ENCODE measurements at regions of chr11 and their contacts with region 1.

Region 1: GRCh38 chr11:120527111-120527761 is 15.7 kb downstream of the GRIK4 start:
- DNase-seq: peak in 1 of 4 donors; percentile 75
- ATAC-seq: peak; percentile 39
- H3K4me3 ChIP-seq: no peak overlapping the region
- H3K27ac ChIP-seq: no peak overlapping the region
- H3K4me1 ChIP-seq: no peaks in the 10 kb centered on the region
- H3K27me3 ChIP-seq: peaks cover 0 to 65% of the 10 kb centered on the region in 2 donors
- CTCF ChIP-seq: no peak

Region 2: DNA sequence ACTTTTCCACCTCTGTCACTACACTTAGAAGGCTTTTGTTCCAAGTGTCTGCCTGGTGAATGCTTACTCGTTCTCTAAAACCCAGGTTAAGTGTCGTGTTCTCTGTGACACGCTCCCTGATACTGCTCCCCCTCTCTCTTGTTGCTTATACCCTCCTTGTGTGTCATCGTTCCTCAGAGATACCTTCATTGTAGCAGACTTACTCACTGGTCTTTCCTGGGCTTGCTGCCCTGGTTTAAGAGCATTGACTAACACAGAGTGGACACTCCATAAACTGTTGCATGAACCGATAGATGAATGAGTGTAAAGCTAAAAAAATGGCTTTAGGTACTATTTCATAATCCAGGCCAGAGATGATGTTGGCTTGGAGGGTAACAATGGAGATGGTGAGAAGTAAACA is 155.6 kb after region 1 on chr11:
- intact Hi-C with region 1: loop called in 1 of 2 experiments (anchors 5 kb)
- DNase-seq: no peak
- ATAC-seq: no peak
- H3K4me3 ChIP-seq: no peak overlapping the region
- H3K27ac ChIP-seq: no peak overlapping the region
- H3K4me1 ChIP-seq: no peaks in the 10 kb centered on the region
- H3K27me3 ChIP-seq: peaks cover 0 to 23% of the 10 kb centered on the region in 2 donors
- CTCF ChIP-seq: no peak

Region 3: GRCh38 chr11:120775986-120776951 is 249.0 kb after region 1 on chr11:
- intact Hi-C with region 1: no loop called
- DNase-seq: peak in 1 of 4 donors; percentile 7
- ATAC-seq: no peak
- H3K4me3 ChIP-seq: no peak overlapping the region
- H3K27ac ChIP-seq: no peak overlapping the region
- H3K4me1 ChIP-seq: no peaks in the 10 kb centered on the region
- H3K27me3 ChIP-seq: peaks cover 0 to 5% of the 10 kb centered on the region in 2 donors
- CTCF ChIP-seq: no peak

Region 4: GRCh38 chr11:120792306-120792705 is 265.1 kb after region 1 on chr11:
- intact Hi-C with region 1: loop called in 1 of 2 experiments (anchors 10 kb)
- DNase-seq: no peak
- ATAC-seq: peak; percentile 75
- H3K4me3 ChIP-seq: no peak overlapping the region
- H3K27ac ChIP-seq: no peak overlapping the region
- H3K4me1 ChIP-seq: no peaks in the 10 kb centered on the region
- H3K27me3 ChIP-seq: peaks cover 0 to 3% of the 10 kb centered on the region in 2 donors
- CTCF ChIP-seq: no peak

Measured in left lung (tissue), 14 donors.